Activated naive CD4-positive, alpha-beta T cell treated with anti-CD3 and anti-CD28 coated beads for 36 hours (primary cell): ENCODE measurements at regions of chr12 and their contacts with region 1.

Region 1: GRCh38 chr12:120012067-120012621 is 23.1 kb downstream of the BICDL1 start:
- DNase-seq: peak; percentile 94
- H3K4me3 Mint-ChIP-seq: peak overlapping the region; percentile 73
- H3K27ac Mint-ChIP-seq: peak overlapping the region; percentile 97
- H3K4me1 Mint-ChIP-seq: peaks cover 87% of the 10 kb centered on the region
- H3K27me3 Mint-ChIP-seq: no peaks in the 10 kb centered on the region

Region 2: DNA sequence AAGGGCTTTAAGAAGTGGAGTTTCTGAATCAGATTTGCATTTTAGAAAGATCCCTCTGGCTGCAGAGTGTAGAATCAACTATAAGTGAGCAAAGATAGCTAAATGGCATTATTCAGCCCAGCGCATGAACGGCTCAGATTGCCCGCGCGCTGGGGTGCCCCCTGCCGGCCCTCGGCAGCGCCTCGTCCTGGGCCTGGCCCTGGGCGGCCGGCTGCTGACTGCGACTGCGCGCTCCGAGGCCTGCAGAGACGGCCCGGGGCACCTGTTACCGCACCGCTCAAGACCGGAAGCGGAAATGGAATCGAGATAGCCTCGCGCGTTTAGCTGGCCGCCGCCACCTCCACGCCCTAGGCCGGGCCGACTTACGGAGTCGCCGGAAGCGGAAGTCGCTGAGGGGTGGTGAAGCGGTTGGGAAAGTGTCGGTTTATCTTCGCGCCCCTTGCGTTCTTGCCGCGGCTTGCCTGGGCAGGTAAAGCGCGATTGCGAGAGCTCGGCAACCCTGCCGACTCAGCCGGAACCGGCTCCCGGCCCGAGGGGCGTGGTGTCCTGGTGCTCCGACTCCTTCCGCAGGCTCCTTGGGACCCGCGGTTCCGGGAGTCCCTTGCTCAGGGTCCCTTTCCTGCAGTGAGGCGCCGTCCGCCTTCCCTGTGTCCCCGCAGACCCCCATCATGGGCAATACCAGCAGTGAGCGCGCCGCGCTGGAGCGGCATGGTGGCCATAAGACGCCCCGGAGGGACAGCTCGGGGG is 344.4 kb before region 1 on chr12 and contains the start of gene PRKAB1:
- CTCF ChIA-PET with region 1: no interaction called
- intact Hi-C with region 1: loop called (anchors 1 kb)
- DNase-seq: peak; percentile 96
- H3K4me3 Mint-ChIP-seq: peak within 1 kb of the TSS; percentile 90
- H3K27ac Mint-ChIP-seq: peak within 1 kb of the TSS; percentile 95
- H3K4me1 Mint-ChIP-seq: peaks cover 52% of the 10 kb centered on the region
- H3K27me3 Mint-ChIP-seq: no peaks in the 10 kb centered on the region
- total RNA-seq, gene PRKAB1: 34.3 to 39.8 TPM

Region 3: DNA sequence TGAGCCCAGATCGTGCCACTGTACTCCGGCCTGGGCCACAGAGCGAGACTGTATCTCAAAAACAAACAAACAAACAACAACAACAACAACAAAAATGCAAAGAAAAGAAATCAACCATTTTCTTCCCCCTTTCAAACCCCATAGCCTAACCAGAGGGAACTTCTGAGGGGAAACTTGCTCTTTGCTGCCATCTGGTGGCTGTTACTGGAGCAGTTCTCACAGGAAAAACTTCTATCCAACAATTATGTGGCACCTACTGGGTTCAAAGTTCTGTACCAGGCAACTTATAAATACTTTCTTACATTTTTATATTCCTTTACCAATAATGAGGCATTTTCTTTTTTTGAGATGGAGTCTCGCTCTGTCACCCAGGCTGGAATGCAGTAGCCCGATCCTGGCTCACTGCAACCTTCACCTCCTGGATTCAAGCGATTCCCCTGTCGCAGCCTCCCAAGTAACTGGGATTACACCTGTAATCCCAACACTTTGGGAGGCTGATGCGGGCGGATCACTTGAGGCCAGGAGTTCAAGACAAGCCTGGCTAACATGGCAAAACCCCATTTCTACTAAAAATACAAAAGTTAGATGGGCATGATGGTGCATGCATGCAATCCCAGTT is 74.0 kb before region 1 on chr12:
- CTCF ChIA-PET with region 1: no interaction called
- intact Hi-C with region 1: no loop called
- DNase-seq: peak; percentile 84
- H3K4me3 Mint-ChIP-seq: no peak overlapping the region
- H3K27ac Mint-ChIP-seq: no peak overlapping the region
- H3K4me1 Mint-ChIP-seq: no peaks in the 10 kb centered on the region
- H3K27me3 Mint-ChIP-seq: peaks cover 3% of the 10 kb centered on the region

Region 4: GRCh38 chr12:119988782-119989668 is 23.1 kb before region 1 on chr12 and contains the start of gene BICDL1:
- CTCF ChIA-PET with region 1: interaction called, 15 read pairs
- intact Hi-C with region 1: loop called (anchors 1 kb)
- DNase-seq: peak; percentile 97
- H3K4me3 Mint-ChIP-seq: peak within 1 kb of the TSS; percentile 91
- H3K27ac Mint-ChIP-seq: peak within 1 kb of the TSS; percentile 93
- H3K4me1 Mint-ChIP-seq: peaks cover 45% of the 10 kb centered on the region
- H3K27me3 Mint-ChIP-seq: no peaks in the 10 kb centered on the region
- total RNA-seq, gene BICDL1: 128 to 133 TPM

Region 5: GRCh38 chr12:120116792-120117651 is 104.9 kb after region 1 on chr12:
- CTCF ChIA-PET with region 1: no interaction called
- intact Hi-C with region 1: loop called (anchors 1 kb)
- DNase-seq: peak; percentile 98
- H3K4me3 Mint-ChIP-seq: peak overlapping the region; percentile 81
- H3K27ac Mint-ChIP-seq: peak overlapping the region; percentile 85
- H3K4me1 Mint-ChIP-seq: peaks cover 72% of the 10 kb centered on the region
- H3K27me3 Mint-ChIP-seq: no peaks in the 10 kb centered on the region

Region 6: GRCh38 chr12:120249875-120250795 is 238.0 kb after region 1 on chr12:
- CTCF ChIA-PET with region 1: no interaction called
- intact Hi-C with region 1: loop called (anchors 2 kb)
- DNase-seq: peak; percentile 69
- H3K4me3 Mint-ChIP-seq: peak overlapping the region; percentile 41
- H3K27ac Mint-ChIP-seq: peak overlapping the region; percentile 84
- H3K4me1 Mint-ChIP-seq: peaks cover 80% of the 10 kb centered on the region
- H3K27me3 Mint-ChIP-seq: no peaks in the 10 kb centered on the region

Region 7: DNA sequence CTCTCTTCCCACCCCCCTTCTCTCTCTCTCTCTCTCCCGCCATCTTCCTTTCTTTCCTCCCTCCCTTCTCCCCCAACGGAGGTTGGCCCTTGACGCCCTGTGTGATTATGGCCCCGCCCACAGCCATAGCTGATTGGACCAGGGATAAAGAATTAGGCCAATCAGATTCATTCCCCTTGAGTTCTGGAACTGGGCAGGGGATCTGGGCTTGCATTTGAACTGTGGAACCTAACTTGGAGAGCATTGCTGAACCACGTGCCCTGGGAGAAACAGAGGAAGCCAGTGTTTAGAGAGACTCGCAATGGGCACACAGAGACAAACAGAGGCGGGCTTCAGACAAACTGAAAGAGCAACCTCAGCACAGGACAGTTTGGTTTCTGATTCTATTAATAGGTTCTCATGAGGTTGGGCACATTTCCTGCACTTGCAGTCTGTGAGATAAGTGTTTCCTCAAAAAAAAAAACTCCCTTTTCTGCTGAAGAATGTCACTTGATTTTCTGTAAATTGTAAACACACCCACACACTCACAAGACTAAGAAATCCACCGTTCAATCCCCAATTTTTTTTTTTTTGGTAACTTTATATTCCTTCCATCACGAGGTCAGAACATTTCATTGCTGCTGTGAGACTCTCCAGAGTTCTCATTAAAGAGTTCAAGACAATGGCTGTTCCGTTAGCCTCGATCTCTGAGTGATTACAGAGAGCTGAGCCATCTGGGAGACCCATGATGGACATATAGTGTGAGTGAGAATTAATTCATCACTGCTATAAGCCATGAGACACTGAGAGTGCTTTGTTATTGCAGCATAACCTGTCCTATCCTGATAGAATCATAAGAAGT is 1117.0 kb after region 1 on chr12:
- CTCF ChIA-PET with region 1: no interaction called
- intact Hi-C with region 1: loop called (anchors 5 kb)
- DNase-seq: peak; percentile 93
- H3K4me3 Mint-ChIP-seq: peak overlapping the region; percentile 60
- H3K27ac Mint-ChIP-seq: peak overlapping the region; percentile 98
- H3K4me1 Mint-ChIP-seq: peaks cover 62% of the 10 kb centered on the region
- H3K27me3 Mint-ChIP-seq: no peaks in the 10 kb centered on the region